Head of caudate nucleus (tissue), 42 donors: ENCODE measurements at regions of chr18 and their contacts with region 1.

Region 1: DNA sequence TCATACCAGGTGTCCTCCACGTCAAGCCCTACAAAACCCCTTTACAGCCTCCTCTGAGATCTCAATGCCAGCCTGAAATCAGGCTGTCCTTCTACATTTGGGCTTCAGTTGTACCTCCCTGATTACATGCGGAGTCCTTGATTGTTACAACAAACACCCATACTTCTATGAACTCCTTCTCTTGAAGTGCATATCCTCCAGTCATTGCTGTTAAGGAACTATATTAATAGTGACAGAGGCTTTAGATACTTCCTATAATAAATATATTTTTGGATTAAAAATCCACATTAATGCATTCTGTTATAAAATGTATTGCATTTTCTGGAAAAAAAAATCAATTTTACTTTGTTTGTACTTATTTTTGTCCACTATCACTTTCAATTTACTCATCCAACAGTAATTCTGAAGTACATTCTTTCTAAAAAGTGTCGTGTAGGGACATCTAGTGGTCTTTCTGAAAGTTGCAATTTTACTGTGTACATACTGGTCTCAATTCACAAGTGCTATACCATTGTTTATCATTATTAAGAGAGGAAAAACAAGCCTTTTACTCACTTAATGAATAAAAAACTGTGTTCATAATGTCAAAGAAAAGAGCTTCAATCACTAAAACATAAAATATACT is 316.4 kb downstream of the DSEL start:
- DNase-seq: peak in 3 of 42 donors; percentile 14 to 69 (median 21)

Region 2: DNA sequence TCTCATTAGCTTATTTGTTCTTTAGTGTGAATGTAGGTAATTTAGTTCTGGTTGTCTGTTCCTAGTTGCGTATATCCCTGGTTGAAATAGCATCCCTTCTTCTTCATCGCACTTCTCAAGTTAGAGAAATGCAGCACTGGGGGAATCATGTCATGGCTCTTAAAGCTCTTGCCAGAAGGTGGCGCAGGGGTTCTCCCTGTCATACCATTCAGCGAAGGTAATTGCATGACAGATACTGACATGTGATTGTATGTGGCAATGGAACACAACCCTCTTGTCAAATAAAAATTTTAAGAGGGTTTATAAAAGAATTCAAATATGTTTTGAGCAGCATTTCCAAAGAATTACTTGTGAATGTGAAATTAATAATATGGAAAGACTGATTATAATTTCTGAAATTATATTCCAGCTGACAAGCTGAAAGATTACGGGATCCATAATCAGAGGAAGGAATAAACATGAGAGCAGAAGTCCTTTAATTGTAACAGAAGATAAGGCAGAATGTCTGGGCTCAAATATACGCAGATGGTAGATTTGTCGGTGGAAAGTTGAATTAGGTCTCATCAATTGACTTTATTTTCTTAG is 95.3 kb before region 1 on chr18:
- intact Hi-C with region 1: loop called (anchors 5 kb)
- DNase-seq: peak; percentile 47 to 94 (median 78)